Sigmoid colon (tissue), 7 donors: ENCODE measurements at regions of chr3 and their contacts with region 1.

Region 1: DNA sequence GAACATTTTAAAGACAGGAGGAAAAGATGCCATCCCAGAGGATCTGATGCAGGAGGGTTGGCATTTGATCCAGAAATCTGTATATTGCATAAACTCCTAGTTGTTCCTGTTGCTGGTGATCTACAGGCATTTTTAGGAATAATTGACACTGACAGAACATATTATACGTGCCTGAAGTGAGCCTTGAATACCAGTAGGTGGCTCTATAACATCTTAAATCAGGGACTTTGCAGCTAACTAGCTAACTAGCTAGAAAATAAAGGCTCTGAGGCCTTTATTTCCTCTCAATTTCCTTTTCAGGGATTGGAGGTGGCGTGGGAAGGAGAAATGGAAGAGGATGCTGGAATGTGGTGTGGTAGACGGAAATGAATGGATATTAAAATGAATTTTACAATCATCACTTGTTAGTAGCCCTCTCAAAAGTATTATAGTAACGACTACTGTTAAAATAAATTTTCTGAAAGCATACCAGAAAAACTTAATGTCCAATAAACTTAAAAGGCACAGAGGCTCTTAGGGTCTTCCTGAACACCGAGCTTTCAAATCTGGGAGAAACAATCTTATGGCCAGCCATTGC is 73.9 kb upstream of the ZBED2 start:
- DNase-seq: no peak
- H3K4me3 ChIP-seq: no peak overlapping the region
- H3K27ac ChIP-seq: peak overlapping the region in 1 of 4 donors; percentile 47
- H3K4me1 ChIP-seq: peaks cover 0 to 9% (median 3%) of the 10 kb centered on the region in 4 donors
- H3K27me3 ChIP-seq: no peaks in the 10 kb centered on the region
- CTCF ChIP-seq: peak; percentile 63 to 81 (median 70)
- EP300 ChIP-seq: no peak
- POLR2A ChIP-seq: no peak

Region 2: GRCh38 chr3:112013058-112013783 is 344.2 kb after region 1 on chr3:
- intact Hi-C with region 1: loop called (anchors 1 kb)
- DNase-seq: peak; percentile 78
- H3K4me3 ChIP-seq: peak overlapping the region in 1 of 4 donors; percentile 18
- H3K27ac ChIP-seq: peak overlapping the region in 1 of 4 donors; percentile 32
- H3K4me1 ChIP-seq: peaks cover 0 to 10% (median 2%) of the 10 kb centered on the region in 4 donors
- H3K27me3 ChIP-seq: no peaks in the 10 kb centered on the region
- CTCF ChIP-seq: peak; percentile 64 to 72 (median 67)
- EP300 ChIP-seq: no peak
- POLR2A ChIP-seq: no peak

Region 3: DNA sequence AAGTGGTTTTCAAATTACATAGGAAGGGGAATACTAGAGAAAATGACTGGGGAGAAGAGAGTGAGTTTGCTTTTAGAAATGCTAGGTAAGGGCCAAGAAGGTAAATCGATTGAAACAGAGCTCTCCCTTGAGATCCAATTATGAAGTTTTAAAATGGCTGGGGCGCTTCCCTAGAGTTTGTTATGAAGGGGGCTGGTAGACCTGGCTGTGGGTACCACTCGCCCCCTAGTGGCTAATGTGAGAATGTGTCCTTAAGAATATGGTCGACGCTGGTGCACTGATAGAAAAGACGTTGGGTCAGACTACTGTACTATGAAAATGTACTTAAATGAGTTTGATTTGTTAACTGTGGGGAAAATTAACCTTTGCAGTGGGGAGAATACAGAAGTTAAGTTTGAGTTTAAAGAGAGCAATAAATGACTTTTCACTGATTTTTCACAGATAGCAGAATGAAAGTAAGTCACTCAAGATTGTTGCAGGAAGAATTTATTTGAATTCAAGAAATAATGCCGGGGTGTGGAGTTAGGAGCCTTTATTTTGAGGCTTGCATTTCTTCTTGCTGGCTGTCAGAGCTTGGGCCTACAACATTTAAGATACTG is 374.7 kb after region 1 on chr3:
- intact Hi-C with region 1: loop called (anchors 1 kb)
- DNase-seq: no peak
- H3K4me3 ChIP-seq: no peak overlapping the region
- H3K27ac ChIP-seq: no peak overlapping the region
- H3K4me1 ChIP-seq: peaks cover 0 to 8% (median 2%) of the 10 kb centered on the region in 4 donors
- H3K27me3 ChIP-seq: no peaks in the 10 kb centered on the region
- CTCF ChIP-seq: peak; percentile 57 to 76 (median 66)
- EP300 ChIP-seq: no peak
- POLR2A ChIP-seq: no peak